ENCODE measurements at regions of chr20 and their contacts with region 1.

Region 1: DNA sequence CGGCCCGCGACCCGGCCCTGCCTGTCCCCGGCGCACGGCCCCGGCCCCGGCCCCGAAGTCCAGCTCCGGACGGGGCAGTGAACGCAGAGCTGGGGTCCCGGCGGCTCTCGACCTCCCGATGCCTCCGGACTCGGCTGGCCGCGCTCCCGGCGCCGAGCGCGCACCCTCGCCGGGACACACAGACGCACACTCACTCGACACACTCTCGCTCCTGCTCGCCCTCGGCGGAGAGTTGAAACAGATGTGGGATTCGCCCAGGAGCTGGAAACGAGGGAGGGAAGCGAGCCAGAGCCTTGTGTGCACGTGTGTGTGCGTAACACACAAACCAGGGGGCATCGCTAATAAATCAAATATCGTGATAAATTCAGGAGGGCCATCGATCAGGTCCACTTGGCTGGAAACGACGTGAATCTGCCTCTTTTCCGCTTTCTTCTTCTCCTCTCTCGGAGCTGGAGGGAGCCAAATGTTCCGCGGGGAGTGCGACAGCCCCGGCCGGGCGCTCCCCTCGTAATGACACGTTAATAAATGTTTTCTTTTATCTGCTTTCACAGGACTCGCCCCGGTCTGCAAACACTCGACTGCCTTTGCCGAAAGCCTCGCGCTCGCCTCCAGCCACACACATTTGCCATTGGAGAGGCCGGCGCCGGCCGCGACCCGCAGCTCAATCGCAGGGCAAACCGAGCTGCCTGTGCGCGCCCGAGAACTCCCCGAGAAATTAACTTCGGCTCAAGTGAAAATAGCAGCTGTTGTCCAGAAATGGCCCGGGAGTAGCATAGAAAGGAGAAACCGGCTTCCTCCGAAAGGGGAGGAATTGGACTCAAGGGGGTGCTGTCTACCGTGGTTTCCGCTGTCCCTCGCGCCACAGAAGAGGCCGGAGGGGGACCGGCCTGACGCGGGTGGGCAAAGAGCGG is 828 bp upstream of the SULF2 start:
- DNase-seq: peak; percentile 96
- H3K27ac ChIP-seq: peak overlapping the region; percentile 98
- CTCF ChIP-seq: peak; percentile 94

Region 2: GRCh38 chr20:47561180-47561579 is 224.9 kb before region 1 on chr20:
- CTCF ChIA-PET with region 1: no interaction called
- POLR2A ChIA-PET with region 1: no interaction called
- DNase-seq: no peak
- H3K27ac ChIP-seq: no peak overlapping the region
- CTCF ChIP-seq: no peak

Region 3: GRCh38 chr20:47725248-47725973 is 60.7 kb before region 1 on chr20:
- CTCF ChIA-PET with region 1: interaction called, 10 read pairs
- POLR2A ChIA-PET with region 1: interaction called, 3 read pairs
- DNase-seq: peak; percentile 91
- H3K27ac ChIP-seq: peak overlapping the region; percentile 69
- CTCF ChIP-seq: peak; percentile 99

Region 4: GRCh38 chr20:47818996-47819609 is 33.0 kb after region 1 on chr20:
- CTCF ChIA-PET with region 1: interaction called, 11 read pairs
- POLR2A ChIA-PET with region 1: no interaction called
- DNase-seq: no peak
- H3K27ac ChIP-seq: peak overlapping the region; percentile 87
- CTCF ChIP-seq: no peak

Region 5: DNA sequence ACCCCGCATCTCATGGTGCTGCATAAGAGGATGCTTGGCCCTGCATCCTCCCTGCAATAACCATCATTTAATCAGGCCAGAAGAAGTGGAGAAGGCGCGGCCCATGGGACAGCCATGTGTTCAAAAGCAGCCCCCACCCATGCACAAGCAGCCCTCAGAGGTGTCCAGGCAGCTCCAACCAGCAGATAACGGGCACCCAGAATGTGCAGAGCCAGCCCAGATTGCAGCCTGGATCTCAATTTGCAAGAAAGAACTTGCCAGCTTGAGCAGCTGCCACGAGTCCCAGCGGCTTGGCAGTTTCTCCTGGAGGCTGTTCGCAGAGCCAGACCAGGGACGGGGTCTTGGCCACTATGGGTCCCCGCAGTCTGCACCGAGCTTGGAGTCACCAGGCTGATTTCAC is 60.5 kb after region 1 on chr20:
- CTCF ChIA-PET with region 1: no interaction called
- POLR2A ChIA-PET with region 1: no interaction called
- DNase-seq: no peak
- H3K27ac ChIP-seq: peak overlapping the region; percentile 100
- CTCF ChIP-seq: no peak

Region 6: GRCh38 chr20:48295445-48295963 is 509.4 kb after region 1 on chr20:
- CTCF ChIA-PET with region 1: interaction called, 28 read pairs
- POLR2A ChIA-PET with region 1: no interaction called
- DNase-seq: peak; percentile 97
- H3K27ac ChIP-seq: peak overlapping the region; percentile 78
- CTCF ChIP-seq: peak; percentile 87